Right cardiac atrium (tissue), 5 donors: ENCODE measurements at regions of chr1 and their contacts with region 1.

Region 1: GRCh38 chr1:169546087-169546995 is 39.9 kb downstream of the F5 start:
- DNase-seq: peak in 2 of 3 donors; percentile 18 to 53
- ATAC-seq: peak; percentile 85 to 86
- H3K4me3 ChIP-seq: no peak overlapping the region
- H3K27ac ChIP-seq: no peak overlapping the region
- H3K4me1 ChIP-seq: no peaks in the 10 kb centered on the region
- H3K27me3 ChIP-seq: no peaks in the 10 kb centered on the region

Region 2: GRCh38 chr1:169466259-169467230 is 79.8 kb before region 1 on chr1:
- intact Hi-C with region 1: loop called in 2 of 4 experiments (anchors 5 to 10 kb)
- DNase-seq: no peak
- ATAC-seq: no peak
- H3K4me3 ChIP-seq: no peak overlapping the region
- H3K27ac ChIP-seq: no peak overlapping the region
- H3K4me1 ChIP-seq: no peaks in the 10 kb centered on the region
- H3K27me3 ChIP-seq: no peaks in the 10 kb centered on the region

Region 3: GRCh38 chr1:169485544-169486278 is 60.6 kb before region 1 on chr1 and contains the start of gene SLC19A2:
- intact Hi-C with region 1: loop called in 2 of 4 experiments (anchors 10 kb)
- DNase-seq: peak; percentile 100
- ATAC-seq: peak; percentile 99
- H3K4me3 ChIP-seq: peak within 1 kb of the TSS; percentile 98
- H3K27ac ChIP-seq: peak within 1 kb of the TSS; percentile 99
- H3K4me1 ChIP-seq: no peaks in the 10 kb centered on the region
- H3K27me3 ChIP-seq: no peaks in the 10 kb centered on the region
- total RNA-seq, gene SLC19A2: 11.2 to 26.5 (median 15.4) TPM

Region 4: GRCh38 chr1:169809370-169810095 is 263.2 kb after region 1 on chr1:
- intact Hi-C with region 1: loop called (anchors 5 to 10 kb)
- DNase-seq: no peak
- ATAC-seq: peak in 1 of 2 donors; percentile 34
- H3K4me3 ChIP-seq: no peak overlapping the region
- H3K27ac ChIP-seq: no peak overlapping the region
- H3K4me1 ChIP-seq: no peaks in the 10 kb centered on the region
- H3K27me3 ChIP-seq: no peaks in the 10 kb centered on the region